ENCODE measurements at regions of chr17 and their contacts with region 1.

Region 1: DNA sequence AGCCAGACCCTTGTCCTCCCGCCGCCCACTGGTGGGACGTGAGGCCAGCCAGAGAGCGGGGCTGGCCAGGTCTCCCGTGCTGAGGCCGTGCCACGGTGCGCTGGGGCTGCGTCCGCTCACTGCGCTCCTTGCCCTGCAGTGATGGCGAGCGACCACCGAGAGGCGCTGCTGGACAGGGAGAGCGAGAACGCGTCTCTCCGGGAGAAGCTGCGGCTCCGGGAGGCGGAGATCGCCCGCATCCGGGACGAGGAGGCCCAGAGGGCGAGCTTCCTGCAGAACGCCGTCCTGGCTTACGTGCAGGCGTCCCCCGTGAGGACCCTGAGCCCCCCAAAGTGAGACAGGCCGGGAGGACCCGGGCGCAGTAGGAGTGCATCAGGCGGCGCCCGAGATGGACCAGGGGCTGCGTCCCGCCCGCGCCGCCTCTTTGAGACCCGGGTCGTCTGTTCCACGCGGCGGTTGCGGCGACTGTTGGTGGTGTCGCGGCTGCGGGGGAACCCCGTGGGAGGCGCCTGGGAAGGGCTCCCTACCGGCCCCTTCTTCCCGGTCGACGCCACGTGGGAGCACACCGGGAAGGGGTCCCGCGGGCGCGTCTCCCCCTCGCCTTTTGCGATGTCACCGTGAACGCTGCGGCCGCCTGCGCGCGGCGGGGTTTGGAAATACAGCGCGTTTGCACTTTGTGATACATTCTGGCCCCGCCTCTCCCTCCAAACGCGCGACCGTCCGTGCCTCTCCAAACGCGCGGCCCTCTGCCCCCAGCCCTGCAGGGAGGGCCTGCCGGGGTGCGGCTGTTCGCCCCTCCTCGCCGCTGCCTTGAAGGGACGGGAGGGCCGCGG is 792 bp upstream of the RAC3 start:
- DNase-seq: peak; percentile 79 to 94 (median 85)
- ATAC-seq: peak; percentile 43 to 89 (median 79)
- H3K4me3 ChIP-seq: peak overlapping the region; percentile 23 to 62 (median 52)
- H3K27ac ChIP-seq: peak overlapping the region in 2 of 12 donors; percentile 3 to 50
- H3K4me1 ChIP-seq: peaks cover 0 to 37% (median 16%) of the 10 kb centered on the region in 12 donors
- H3K27me3 ChIP-seq: peaks cover 0 to 9% (median 0%) of the 10 kb centered on the region in 9 donors
- CTCF ChIP-seq: peak; percentile 86 to 98 (median 95)
- POLR2A ChIP-seq: no peak

Region 2: DNA sequence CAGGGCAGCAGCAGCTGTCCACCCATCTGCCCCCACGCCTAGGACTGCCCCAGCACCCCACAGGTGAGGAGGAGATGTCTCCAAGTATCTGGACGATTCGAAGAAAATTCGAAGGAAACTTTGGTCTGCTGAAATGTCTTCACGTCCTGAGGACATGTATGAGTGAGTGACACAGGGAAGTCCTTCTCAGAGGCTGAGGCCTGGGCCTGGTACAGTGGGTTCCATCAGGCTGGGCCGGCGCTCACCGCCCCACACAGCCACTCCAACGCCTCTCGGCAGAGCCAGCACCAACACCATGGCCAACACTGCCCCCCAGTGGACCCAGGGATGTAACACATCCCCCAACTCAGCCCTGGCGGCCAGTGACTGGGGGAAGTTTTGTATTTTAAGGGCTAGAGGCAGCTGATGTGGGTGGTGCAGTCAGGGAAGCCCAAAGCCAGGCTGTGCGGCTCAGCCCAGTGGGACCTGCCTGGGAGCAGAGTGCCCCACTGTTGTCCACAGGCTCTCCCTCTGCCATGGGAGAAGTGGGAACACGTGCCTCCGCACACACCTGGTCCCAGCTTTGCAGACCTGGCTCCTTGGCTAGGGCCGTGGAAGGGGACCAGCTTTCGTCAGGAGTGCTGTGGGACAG is 123.2 kb after region 1 on chr17:
- intact Hi-C with region 1: loop called (anchors 1 to 5 kb)
- DNase-seq: peak; percentile 71 to 91 (median 77)
- ATAC-seq: peak; percentile 88 to 94 (median 92)
- H3K4me3 ChIP-seq: no peak overlapping the region
- H3K27ac ChIP-seq: no peak overlapping the region
- H3K4me1 ChIP-seq: peaks cover 0 to 5% (median 0%) of the 10 kb centered on the region in 12 donors
- H3K27me3 ChIP-seq: no peaks in the 10 kb centered on the region
- CTCF ChIP-seq: peak; percentile 74 to 95 (median 88)
- POLR2A ChIP-seq: no peak

Region 3: DNA sequence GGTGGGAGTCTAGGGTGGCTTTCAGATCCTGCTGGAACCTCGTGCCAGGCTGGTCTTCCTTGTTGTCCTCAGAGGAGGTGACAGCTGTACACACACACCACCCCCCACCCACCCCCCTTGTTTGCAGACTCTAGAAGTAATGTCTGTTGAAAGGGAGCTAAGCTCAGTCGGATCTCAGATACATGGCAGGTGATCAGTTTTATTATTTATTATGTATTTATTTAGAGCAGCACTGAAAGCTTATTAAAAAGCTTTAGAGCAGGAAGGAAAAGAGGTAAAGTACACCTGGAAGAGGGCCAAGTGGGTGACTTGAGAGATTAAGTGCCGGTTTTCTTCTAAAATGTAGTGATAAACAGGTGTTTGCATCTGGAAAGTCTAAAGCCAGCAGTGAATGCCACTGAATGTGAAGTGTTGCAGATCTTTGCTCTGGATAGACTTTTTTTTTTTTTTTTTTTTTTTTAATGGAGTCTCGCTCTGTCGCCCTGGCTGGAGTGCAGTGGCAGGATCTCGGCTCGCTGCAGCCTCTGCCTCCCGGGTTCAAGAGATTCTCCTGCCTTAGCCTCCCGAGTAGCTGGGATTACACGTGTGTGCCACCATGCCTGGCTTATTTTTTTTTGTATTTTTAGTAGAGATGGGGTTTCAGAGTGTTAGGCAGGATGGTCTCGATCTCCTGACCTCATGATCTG is 529.0 kb after region 1 on chr17:
- intact Hi-C with region 1: no loop called
- DNase-seq: no peak
- ATAC-seq: peak in 1 of 4 donors; percentile 7
- H3K4me3 ChIP-seq: no peak overlapping the region
- H3K27ac ChIP-seq: no peak overlapping the region
- H3K4me1 ChIP-seq: peaks cover 0 to 42% (median 13%) of the 10 kb centered on the region in 12 donors
- H3K27me3 ChIP-seq: no peaks in the 10 kb centered on the region
- CTCF ChIP-seq: no peak
- POLR2A ChIP-seq: no peak

Measured in heart left ventricle (tissue), 16 donors.